CD14-positive monocyte (primary cell): ENCODE measurements at regions of chr1 and their contacts with region 1.

Region 1: DNA sequence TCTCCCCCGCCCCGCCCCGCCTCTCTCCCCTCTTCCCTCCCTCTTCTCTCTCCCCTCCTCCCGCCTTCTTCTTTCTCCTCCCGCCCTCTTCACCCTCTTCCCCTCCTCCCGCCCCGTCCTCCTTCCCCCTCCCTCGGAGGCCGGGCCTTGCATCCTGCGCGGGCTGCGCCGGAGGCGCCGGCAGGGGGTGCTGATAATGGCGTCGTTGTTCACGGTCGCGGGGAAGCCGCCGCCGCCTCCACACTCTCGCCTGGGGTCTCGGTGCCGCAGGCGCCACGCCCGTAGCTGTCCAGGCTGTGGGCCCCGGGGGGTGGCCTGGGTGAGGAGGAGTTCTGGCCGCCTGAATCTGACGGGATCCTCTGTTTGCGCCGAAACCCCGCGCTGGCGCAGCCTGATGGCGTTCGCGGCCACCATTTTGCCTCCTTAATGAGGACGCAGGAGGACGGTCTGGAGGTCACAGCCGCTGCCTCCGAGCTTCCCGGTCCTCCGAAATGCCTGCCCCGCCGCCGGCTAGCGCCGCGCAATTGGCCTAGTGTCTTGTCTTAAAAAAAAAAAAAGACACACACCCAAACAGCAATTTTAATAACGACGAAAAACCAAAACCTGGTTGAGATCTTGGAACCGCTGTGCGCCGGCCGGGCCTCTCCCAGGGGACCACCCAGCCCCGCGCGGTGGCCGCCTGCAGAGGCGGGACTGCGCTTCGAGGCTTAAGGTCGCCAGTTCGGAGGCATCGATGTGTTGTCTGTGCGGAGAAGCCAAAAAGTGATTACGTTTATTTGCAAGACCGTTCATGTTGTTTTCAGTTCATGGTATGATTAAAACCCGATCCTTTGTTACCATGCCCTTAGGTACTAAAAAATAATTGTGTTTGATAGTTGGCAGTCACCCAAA is 106.6 kb upstream of the HNRNPU start:
- DNase-seq: peak; percentile 83 to 96 (median 90)
- H3K4me3 ChIP-seq: peak overlapping the region; percentile 56 to 86 (median 85)
- H3K4me3 Mint-ChIP-seq: peak overlapping the region; percentile 86 to 93
- H3K27ac ChIP-seq: peak overlapping the region; percentile 99 to 100
- H3K27ac Mint-ChIP-seq: peak overlapping the region; percentile 98 to 100 (median 99)
- H3K4me1 ChIP-seq: peaks cover 8 to 21% of the 10 kb centered on the region in 2 donors
- H3K4me1 Mint-ChIP-seq: peaks cover 17% of the 10 kb centered on the region
- H3K27me3 ChIP-seq: no peaks in the 10 kb centered on the region
- H3K27me3 Mint-ChIP-seq: peaks cover 0 to 1% (median 0%) of the 10 kb centered on the region in 3 donors
- CTCF ChIP-seq: peak; percentile 49

Region 2: DNA sequence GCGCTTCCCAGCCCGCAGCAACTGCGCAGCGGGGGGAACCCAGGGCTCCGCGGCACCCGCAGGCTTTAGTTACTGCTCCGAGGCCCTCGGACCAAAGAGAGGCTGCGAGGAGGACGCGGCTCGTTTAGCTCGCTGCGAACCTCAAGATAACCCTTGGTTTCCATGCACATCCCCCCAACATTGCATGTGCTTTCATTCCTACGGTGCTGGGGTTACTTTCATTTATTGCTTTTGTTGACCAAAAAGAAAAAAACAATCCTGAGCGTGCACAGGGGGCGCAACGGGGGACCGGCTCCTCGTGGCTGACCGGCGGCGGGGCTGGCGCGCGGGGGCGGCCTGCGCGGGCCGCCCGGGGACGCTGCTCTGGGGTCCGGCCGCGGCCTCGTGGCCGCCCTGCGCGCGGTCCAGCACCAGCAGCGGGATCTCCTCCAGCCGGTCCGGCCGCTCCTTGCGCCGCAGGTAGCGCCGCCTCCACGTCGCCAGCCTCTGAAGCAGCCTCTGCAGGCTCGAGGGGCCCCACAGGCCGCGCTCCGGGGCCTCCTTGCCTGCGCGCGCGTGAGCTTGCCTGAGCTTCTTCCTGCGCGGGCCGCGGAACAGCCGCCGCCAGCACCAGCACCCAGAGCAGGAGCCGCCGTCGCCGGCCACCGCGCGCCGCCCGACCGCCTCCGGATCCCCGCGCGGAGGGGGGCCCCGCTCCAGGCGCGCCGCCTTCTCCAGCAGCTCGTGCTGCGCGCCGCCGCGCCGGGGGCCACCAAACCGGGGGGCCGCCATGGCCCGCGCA is 240.6 kb before region 1 on chr1:
- intact Hi-C with region 1: no loop called
- DNase-seq: no peak
- H3K4me3 ChIP-seq: peak overlapping the region; percentile 41 to 82 (median 52)
- H3K4me3 Mint-ChIP-seq: peak overlapping the region; percentile 85 to 94
- H3K27ac ChIP-seq: no peak overlapping the region
- H3K27ac Mint-ChIP-seq: peak overlapping the region in 1 of 7 donors; percentile 66
- H3K4me1 ChIP-seq: peaks cover 13 to 16% of the 10 kb centered on the region in 2 donors
- H3K4me1 Mint-ChIP-seq: peaks cover 15% of the 10 kb centered on the region
- H3K27me3 ChIP-seq: peaks cover 11 to 34% of the 10 kb centered on the region in 2 donors
- H3K27me3 Mint-ChIP-seq: peaks cover 37 to 47% (median 43%) of the 10 kb centered on the region in 3 donors
- CTCF ChIP-seq: no peak

Region 3: GRCh38 chr1:244835276-244836134 is 135.4 kb before region 1 on chr1 and contains the start of gene COX20:
- intact Hi-C with region 1: loop called (anchors 2 to 10 kb)
- DNase-seq: peak; percentile 77 to 89 (median 77)
- H3K4me3 ChIP-seq: peak within 1 kb of the TSS; percentile 88 to 95 (median 95)
- H3K4me3 Mint-ChIP-seq: peak within 1 kb of the TSS; percentile 93
- H3K27ac ChIP-seq: peak within 1 kb of the TSS; percentile 93 to 95
- H3K27ac Mint-ChIP-seq: peak within 1 kb of the TSS; percentile 97 to 100 (median 99)
- H3K4me1 ChIP-seq: peaks cover 19 to 35% of the 10 kb centered on the region in 2 donors
- H3K4me1 Mint-ChIP-seq: peaks cover 41% of the 10 kb centered on the region
- H3K27me3 ChIP-seq: no peaks in the 10 kb centered on the region
- H3K27me3 Mint-ChIP-seq: no peaks in the 10 kb centered on the region
- CTCF ChIP-seq: no peak
- polyA plus RNA-seq, gene COX20: 15.8 to 21.6 (median 17.9) TPM

Region 4: GRCh38 chr1:244864253-244865027 is 106.5 kb before region 1 on chr1 and contains the start of gene HNRNPU:
- intact Hi-C with region 1: loop called (anchors 1 to 2 kb)
- DNase-seq: peak; percentile 94 to 98 (median 96)
- H3K4me3 ChIP-seq: peak within 1 kb of the TSS; percentile 88 to 99 (median 97)
- H3K4me3 Mint-ChIP-seq: peak within 1 kb of the TSS; percentile 93 to 95
- H3K27ac ChIP-seq: peak within 1 kb of the TSS; percentile 95 to 99
- H3K27ac Mint-ChIP-seq: peak within 1 kb of the TSS; percentile 97 to 99 (median 98)
- H3K4me1 ChIP-seq: peaks cover 35 to 43% of the 10 kb centered on the region in 2 donors
- H3K4me1 Mint-ChIP-seq: peaks cover 36% of the 10 kb centered on the region
- H3K27me3 ChIP-seq: no peaks in the 10 kb centered on the region
- H3K27me3 Mint-ChIP-seq: peaks cover 0 to 1% (median 0%) of the 10 kb centered on the region in 3 donors
- CTCF ChIP-seq: peak; percentile 24
- polyA plus RNA-seq, gene HNRNPU: 71.5 to 197 (median 143) TPM

Region 5: DNA sequence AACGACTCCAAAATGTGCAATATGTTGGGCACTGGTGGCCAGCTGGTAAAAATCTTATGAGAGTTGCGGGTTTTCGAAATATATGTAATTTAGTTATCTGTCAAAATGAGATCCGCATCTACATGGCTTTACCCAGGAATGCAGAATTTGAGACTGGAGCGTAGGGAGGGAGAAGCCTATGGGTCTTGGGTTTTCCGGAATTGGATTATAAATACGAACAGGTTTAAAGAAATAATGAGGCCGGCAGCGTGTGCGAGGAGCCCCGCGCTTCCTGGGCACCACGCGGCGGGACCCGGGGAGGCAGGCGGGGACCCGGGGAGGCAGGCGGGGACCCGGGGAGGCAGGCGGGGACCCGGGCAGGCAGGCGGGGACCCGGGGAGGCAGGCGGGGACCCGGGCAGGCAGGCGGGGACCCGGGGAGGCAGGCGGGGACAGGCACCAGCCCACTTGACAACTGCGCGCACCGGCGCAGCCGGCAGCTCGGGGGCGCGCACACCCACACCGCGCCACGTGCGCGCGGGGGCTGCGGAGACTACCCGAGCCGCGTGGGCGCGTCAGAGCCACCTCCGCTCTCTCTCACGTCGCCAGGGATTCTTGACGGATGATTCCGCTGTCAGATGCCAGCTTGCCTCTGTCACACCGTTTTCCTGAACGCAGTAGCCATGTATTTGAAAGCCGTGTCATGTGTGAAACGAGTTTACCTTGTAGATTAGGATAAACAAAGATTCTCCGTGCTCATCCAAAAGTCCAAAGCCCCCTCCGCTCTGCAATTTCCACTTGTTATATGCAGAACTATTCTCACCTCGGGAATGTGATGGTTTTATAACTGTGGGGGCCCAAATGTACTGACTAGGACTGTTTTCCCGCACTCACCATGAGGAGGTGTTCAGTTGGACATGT is 52.2 kb before region 1 on chr1:
- intact Hi-C with region 1: loop called in 1 of 2 experiments (anchors 5 kb)
- DNase-seq: peak; percentile 22 to 43 (median 33)
- H3K4me3 ChIP-seq: peak overlapping the region; percentile 51 to 77 (median 72)
- H3K4me3 Mint-ChIP-seq: peak overlapping the region; percentile 92 to 97
- H3K27ac ChIP-seq: no peak overlapping the region
- H3K27ac Mint-ChIP-seq: peak overlapping the region in 6 of 7 donors; percentile 9 to 83 (median 57)
- H3K4me1 ChIP-seq: peaks cover 29 to 39% of the 10 kb centered on the region in 2 donors
- H3K4me1 Mint-ChIP-seq: peaks cover 29% of the 10 kb centered on the region
- H3K27me3 ChIP-seq: no peaks in the 10 kb centered on the region
- H3K27me3 Mint-ChIP-seq: no peaks in the 10 kb centered on the region
- CTCF ChIP-seq: no peak

Region 6: DNA sequence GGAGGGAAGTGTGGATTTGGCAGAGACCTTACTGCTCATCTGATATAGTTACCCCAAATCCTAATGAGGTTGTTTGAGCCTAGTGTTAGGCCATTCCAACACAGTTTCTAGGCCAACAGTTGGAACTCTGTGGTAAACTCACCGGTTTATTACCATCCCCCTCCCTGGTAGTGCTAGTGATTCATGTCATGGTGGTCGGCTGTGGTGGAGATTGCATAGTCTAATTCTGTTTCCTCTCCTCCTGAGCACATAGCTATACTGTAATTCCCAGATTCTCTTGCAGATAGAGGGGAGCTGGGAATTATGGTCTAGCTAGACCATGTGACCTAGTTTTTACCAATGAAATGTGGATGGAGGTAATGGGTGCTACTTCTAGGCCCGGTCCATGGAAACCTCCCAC is 60.1 kb after region 1 on chr1:
- intact Hi-C with region 1: loop called in 1 of 2 experiments (anchors 10 kb)
- DNase-seq: no peak
- H3K4me3 ChIP-seq: no peak overlapping the region
- H3K4me3 Mint-ChIP-seq: no peak overlapping the region
- H3K27ac ChIP-seq: no peak overlapping the region
- H3K27ac Mint-ChIP-seq: no peak overlapping the region
- H3K4me1 ChIP-seq: peaks cover 8 to 21% of the 10 kb centered on the region in 2 donors
- H3K4me1 Mint-ChIP-seq: peaks cover 27% of the 10 kb centered on the region
- H3K27me3 ChIP-seq: no peaks in the 10 kb centered on the region
- H3K27me3 Mint-ChIP-seq: peaks cover 0 to 5% (median 1%) of the 10 kb centered on the region in 3 donors
- CTCF ChIP-seq: no peak

Region 7: DNA sequence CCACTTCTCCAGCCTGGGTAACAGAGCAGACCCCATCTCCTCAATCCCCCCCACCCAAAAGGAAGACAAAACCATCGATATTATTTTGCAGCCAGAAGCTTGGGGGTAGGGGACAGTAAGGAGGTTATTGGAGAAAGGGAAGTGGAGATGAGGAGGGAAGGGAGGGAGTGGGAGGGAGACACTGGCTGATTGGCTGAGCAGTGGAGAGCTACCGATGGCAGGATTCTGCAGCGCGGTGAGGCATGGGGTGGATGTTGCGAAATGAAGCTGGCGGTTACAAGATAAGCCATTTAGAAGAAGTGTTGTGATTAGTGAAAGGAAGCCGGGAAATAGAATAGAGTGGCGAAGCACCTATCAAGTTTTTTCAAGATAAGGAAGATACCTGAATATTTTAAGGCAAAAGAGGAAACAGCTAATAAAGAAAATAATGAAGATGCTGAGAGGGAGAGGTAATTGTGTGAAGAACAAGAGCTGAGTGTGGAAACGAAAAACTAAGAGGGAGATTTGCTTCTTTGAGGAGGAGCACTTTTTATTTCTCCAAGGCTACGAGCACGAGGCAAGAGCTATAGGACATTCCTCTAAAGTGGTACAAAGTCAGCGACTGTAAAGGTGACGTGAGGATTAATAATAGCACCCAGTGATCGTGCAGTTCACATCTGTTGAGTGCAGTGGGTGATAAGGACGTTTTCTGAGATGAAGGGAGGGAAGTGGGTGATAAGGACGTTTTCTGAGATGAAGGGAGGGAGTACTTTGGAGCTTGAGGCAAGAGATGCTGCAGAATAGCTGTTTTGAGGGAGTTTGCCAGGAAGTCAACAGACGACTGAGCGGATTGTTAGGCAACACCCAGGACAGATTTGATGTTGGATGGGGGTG is 80.7 kb after region 1 on chr1:
- intact Hi-C with region 1: loop called in 1 of 2 experiments (anchors 10 kb)
- DNase-seq: peak; percentile 65 to 86 (median 85)
- H3K4me3 ChIP-seq: peak overlapping the region; percentile 33 to 70 (median 42)
- H3K4me3 Mint-ChIP-seq: peak overlapping the region; percentile 78 to 91
- H3K27ac ChIP-seq: peak overlapping the region; percentile 71 to 85
- H3K27ac Mint-ChIP-seq: peak overlapping the region; percentile 88 to 97 (median 95)
- H3K4me1 ChIP-seq: peaks cover 60% of the 10 kb centered on the region in 2 donors
- H3K4me1 Mint-ChIP-seq: peaks cover 70% of the 10 kb centered on the region
- H3K27me3 ChIP-seq: no peaks in the 10 kb centered on the region
- H3K27me3 Mint-ChIP-seq: no peaks in the 10 kb centered on the region
- CTCF ChIP-seq: no peak

Region 8: DNA sequence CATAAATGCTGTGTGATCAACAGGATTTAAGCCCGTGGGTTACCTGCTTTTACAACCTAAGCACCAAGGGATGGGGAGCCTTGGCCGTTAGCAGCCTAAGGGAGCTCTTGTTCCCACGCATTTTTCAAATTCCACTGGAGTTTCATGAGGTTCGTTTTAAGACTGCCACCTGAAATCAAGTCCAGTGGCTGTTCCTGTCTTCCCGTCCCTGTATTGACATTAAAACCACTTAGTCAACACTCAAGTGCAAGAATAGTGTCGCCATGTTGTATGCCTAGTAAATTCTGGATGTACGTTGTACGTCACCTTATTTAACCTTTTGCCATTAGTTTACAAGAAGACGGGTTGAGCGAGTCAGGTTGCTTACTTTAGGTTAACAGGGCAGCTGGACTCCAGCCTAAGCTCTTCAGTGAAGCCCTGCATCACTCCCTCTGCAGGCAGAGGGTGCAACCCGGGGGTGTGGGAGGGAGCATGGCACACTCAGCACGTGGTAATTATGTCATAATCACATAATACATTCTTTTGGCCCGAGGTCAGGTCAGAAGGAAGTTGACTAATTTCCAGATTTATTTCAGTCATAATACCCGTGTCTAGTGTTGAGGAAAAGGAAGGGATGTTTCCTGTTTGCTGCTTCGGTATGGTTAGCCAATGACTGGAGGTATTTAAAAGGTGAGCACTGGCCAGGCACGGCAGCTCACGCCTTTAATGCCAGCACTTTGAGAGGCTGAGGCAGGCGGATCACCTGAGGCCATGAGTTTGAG is 1637.9 kb after region 1 on chr1:
- intact Hi-C with region 1: loop called in 1 of 2 experiments (anchors 10 kb)
- DNase-seq: peak; percentile 86 to 94 (median 93)
- H3K4me3 ChIP-seq: peak overlapping the region in 1 of 3 experiments; percentile 46
- H3K4me3 Mint-ChIP-seq: peak overlapping the region; percentile 66 to 83
- H3K27ac ChIP-seq: peak overlapping the region; percentile 36 to 45
- H3K27ac Mint-ChIP-seq: peak overlapping the region; percentile 86 to 96 (median 94)
- H3K4me1 ChIP-seq: peaks cover 17 to 20% of the 10 kb centered on the region in 2 donors
- H3K4me1 Mint-ChIP-seq: peaks cover 25% of the 10 kb centered on the region
- H3K27me3 ChIP-seq: no peaks in the 10 kb centered on the region
- H3K27me3 Mint-ChIP-seq: peaks cover 0 to 4% (median 1%) of the 10 kb centered on the region in 3 donors
- CTCF ChIP-seq: peak; percentile 23